AG04449 (cell line): ENCODE measurements at regions of chr3 and their contacts with region 1.

Region 1: DNA sequence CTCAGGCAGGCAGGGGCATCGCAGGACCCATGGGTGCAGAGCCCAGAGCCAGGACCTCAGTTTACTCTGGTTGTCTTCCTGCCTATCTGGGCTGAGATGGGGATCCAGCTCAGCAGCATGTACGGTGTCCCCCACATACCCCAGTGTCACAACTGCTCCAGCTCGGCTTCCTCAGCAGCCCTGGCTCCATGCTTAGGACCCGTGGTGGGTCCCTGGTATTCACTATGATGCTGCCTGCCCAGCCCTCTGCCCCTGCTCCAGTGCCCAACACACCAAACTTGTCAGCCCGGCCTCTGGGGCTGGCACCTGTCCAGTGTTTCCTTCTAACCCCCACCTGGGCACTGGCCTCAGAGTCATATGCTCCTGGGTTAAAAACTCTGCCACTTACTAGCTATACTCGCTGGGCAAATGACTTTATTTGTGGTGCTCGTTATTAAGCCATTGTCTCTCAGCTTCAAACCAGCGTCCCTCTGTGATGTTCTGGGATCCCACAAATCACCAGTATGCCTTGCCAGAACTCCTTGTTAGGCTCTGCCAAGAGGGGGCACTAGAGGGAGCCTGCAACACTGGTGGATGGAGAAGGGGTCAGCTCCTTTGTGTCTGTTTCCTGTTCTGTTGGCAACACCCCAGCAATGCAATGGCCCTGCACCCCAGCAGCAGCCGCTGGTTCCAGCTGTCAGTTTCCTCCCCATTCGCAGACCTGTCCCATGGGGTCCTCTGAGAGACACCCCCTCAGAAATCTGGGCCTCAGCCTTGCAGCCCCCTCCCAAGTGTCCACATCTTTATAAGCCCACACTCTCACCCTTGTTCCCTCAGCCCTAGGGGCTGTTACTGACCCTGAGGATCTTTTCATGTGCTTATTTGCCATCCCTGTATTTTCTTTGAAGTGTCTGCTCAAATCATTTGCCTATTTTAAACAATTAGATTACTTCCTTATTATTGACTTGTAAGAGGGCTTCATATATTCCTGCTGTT is 24.1 kb upstream of the MRPS22 start:
- DNase-seq: no peak
- H3K4me3 ChIP-seq: no peak overlapping the region
- CTCF ChIP-seq: peak; percentile 27

Region 2: DNA sequence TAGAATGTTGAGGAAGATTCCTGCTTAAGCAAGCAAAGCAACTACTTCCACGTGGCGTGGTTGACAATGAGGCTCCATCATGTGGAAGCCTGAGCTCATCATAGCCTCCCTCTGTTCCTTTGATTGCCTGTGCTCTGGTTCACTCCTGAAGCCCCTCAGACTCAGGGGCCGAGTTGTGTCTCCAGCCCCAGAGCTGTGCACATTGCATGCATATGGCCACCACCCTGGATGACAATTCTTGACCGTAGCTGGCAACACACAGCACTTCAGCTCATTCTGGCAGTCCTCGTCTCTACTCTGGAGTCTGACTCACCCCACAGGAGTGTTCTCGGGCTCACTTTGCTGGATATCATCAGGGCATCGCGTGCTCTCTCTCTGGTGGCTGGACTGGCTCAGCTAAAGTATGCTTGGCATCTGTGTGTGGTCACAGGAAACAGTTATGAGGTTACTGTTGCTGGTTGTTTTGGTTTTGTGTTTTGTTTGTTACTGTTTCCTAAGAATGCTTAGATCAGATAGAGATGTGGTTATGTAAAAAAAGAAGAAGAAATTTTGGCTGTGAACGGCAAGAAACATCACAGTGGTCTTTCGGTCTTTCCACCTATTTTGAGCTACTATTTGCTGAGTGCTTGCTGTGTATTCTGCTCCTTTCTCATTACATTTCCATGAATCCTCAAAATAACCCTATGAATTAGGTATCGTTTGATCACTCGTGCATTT is 17.5 kb before region 1 on chr3:
- CTCF ChIA-PET with region 1: interaction called, 16 read pairs
- POLR2A ChIA-PET with region 1: no interaction called
- DNase-seq: peak; percentile 98
- H3K4me3 ChIP-seq: no peak overlapping the region
- CTCF ChIP-seq: no peak